ENCODE measurements at regions of chr17 and their contacts with region 1.

Region 1: GRCh38 chr17:69235338-69235930 is 6.8 kb upstream of the ABCA10 start:
- DNase-seq: peak; percentile 67
- H3K4me3 ChIP-seq: no peak overlapping the region
- H3K27ac ChIP-seq: no peak overlapping the region
- H3K4me1 ChIP-seq: no peaks in the 10 kb centered on the region
- H3K27me3 ChIP-seq: no peaks in the 10 kb centered on the region
- CTCF ChIP-seq: peak; percentile 52 to 79

Region 2: DNA sequence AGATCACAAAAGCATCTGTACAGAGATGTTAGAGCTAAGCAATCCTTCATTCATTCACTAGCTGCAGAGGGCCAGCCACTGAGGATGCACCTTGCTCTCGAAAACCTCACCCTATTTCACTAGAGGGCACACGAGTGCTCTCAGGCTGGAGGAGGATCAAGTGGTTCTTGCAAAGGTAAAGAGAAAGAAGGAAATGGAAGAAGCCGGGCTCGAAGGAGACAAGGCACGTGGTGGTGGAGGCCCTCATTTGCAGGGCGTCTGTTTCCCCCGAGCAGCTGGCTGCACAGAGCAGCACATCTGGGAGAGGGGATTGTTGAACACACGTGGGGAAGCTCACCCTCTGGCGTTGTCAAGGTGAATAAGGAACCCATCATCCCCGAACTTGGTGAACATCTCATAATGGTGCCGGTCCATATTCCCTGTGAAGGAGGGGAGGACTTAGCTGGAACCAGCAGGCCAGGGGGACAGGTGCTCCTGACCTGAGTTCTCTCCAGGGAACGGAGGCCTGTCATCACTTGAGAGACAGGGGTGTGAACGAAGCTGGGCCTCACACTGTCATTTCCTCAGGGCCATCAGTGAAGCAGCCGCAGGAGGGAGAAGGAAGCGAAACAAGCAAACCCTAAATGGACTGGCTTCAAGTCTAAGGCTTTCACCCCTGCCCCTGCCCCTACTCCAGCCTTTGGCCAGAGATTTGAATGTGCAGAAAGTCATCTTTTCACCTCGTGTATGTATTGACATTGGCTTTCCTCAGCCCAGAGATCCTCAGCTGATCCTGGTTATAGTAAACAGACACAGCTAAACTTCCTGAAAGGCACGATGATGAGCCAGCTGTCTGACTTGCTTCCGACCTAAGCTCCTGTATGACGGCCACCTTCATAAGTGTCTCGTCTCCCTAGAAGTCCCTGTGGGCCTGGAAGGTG is 695.6 kb before region 1 on chr17:
- CTCF ChIA-PET with region 1: no interaction called
- dilution Hi-C with region 1: no loop called
- in situ Hi-C with region 1: loop called in 1 of 2 experiments (anchors 25 kb)
- intact Hi-C with region 1: no loop called
- DNase-seq: peak; percentile 19
- H3K4me3 ChIP-seq: no peak overlapping the region
- H3K27ac ChIP-seq: no peak overlapping the region
- H3K4me1 ChIP-seq: no peaks in the 10 kb centered on the region
- H3K27me3 ChIP-seq: no peaks in the 10 kb centered on the region
- CTCF ChIP-seq: peak; percentile 9 to 63

Region 3: GRCh38 chr17:68794636-68795434 is 440.6 kb before region 1 on chr17:
- CTCF ChIA-PET with region 1: no interaction called
- dilution Hi-C with region 1: no loop called
- in situ Hi-C with region 1: no loop called
- intact Hi-C with region 1: loop called (anchors 1 kb)
- DNase-seq: no peak
- H3K4me3 ChIP-seq: peak overlapping the region in 1 of 3 experiments; percentile 9
- H3K27ac ChIP-seq: no peak overlapping the region
- H3K4me1 ChIP-seq: no peaks in the 10 kb centered on the region
- H3K27me3 ChIP-seq: no peaks in the 10 kb centered on the region
- CTCF ChIP-seq: peak; percentile 29 to 43

Region 4: GRCh38 chr17:68972119-68972704 is 263.2 kb before region 1 on chr17:
- CTCF ChIA-PET with region 1: no interaction called
- dilution Hi-C with region 1: no loop called
- in situ Hi-C with region 1: no loop called
- intact Hi-C with region 1: loop called (anchors 1 kb)
- DNase-seq: no peak
- H3K4me3 ChIP-seq: no peak overlapping the region
- H3K27ac ChIP-seq: no peak overlapping the region
- H3K4me1 ChIP-seq: no peaks in the 10 kb centered on the region
- H3K27me3 ChIP-seq: no peaks in the 10 kb centered on the region
- CTCF ChIP-seq: peak; percentile 38 to 64

Region 5: DNA sequence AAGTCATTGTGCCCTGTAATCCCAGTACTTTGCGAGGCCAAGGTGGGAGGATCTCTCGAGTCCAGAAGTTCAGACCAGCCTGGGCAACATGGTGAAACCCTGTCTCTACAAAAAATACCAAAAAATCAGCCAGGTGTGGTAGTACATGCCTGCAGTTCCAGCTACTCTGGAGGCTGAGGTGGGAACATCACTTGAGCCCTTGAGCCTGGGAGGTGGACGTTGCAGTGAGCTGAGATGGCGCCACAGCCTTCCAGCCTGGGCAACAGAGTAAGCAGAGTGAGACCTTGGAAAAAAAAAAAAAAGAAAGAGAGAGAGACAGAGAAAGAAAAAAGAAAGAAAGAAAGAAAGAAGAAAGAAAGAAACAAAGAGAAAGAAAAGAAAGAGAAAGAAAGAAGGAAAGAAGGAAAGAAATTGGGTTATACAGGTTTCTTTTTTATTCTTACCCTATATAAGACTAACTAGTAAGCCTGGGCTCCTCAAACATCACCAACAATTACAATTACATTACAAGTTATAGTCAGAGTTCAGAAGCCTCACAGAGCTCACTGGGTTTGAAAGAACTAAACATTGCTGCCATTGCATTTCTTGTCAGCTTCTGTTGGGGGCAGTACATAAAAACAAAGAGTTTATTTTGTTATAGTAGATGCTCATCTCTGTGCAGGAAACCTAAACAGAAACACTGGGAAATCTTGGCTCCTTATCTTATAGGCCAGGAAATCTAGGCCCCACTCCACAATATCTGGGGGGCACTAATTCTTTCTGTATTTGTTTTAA is 168.0 kb before region 1 on chr17:
- CTCF ChIA-PET with region 1: no interaction called
- dilution Hi-C with region 1: no loop called
- in situ Hi-C with region 1: loop called in 1 of 2 experiments (anchors 25 kb)
- intact Hi-C with region 1: loop called (anchors 2 kb)
- DNase-seq: no peak
- H3K4me3 ChIP-seq: no peak overlapping the region
- H3K27ac ChIP-seq: no peak overlapping the region
- H3K4me1 ChIP-seq: no peaks in the 10 kb centered on the region
- H3K27me3 ChIP-seq: no peaks in the 10 kb centered on the region
- CTCF ChIP-seq: peak in 1 of 2 donors; percentile 31

Region 6: GRCh38 chr17:69300222-69300621 is 64.8 kb after region 1 on chr17:
- CTCF ChIA-PET with region 1: no interaction called
- dilution Hi-C with region 1: no loop called
- in situ Hi-C with region 1: no loop called
- intact Hi-C with region 1: no loop called
- DNase-seq: no peak
- H3K4me3 ChIP-seq: no peak overlapping the region
- H3K27ac ChIP-seq: no peak overlapping the region
- H3K4me1 ChIP-seq: no peaks in the 10 kb centered on the region
- H3K27me3 ChIP-seq: no peaks in the 10 kb centered on the region
- CTCF ChIP-seq: no peak

Region 7: DNA sequence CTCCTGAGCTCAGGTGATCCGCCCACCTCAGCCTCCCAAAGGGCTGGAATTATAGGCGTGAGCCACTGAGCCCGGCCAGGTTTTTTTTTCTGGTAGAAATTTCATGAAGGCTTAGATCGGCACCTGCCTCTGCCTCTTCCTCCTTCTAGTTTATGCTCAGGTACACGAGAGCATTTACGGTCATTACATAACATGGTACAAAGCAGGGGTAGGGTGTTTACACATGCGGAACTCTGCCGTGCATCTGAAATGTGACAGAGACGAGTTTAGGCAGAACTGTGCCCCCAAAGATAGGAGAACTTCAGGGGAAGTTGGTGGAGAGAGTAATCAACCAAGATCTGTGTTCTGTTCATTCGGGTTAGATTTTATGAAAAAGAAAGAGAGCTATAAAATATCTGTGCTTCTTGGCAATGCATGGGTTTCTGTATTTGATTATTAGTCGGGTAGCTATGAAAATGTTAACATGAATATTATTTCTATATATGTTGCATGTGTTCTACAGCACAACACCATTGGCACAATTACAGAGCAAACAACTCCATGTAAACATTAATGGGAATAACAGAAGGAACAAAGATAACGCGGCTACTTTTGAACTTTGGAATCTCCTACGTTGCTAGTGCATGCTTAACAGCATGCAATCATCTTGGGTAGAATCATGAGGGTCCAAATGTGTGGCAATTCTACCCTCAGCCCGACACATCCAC is 155.5 kb after region 1 on chr17:
- CTCF ChIA-PET with region 1: no interaction called
- dilution Hi-C with region 1: no loop called
- in situ Hi-C with region 1: no loop called
- intact Hi-C with region 1: no loop called
- DNase-seq: no peak
- H3K4me3 ChIP-seq: no peak overlapping the region
- H3K27ac ChIP-seq: no peak overlapping the region
- H3K4me1 ChIP-seq: no peaks in the 10 kb centered on the region
- H3K27me3 ChIP-seq: no peaks in the 10 kb centered on the region
- CTCF ChIP-seq: no peak